ENCODE measurements at regions of chr2 and their contacts with region 1.

Region 1: DNA sequence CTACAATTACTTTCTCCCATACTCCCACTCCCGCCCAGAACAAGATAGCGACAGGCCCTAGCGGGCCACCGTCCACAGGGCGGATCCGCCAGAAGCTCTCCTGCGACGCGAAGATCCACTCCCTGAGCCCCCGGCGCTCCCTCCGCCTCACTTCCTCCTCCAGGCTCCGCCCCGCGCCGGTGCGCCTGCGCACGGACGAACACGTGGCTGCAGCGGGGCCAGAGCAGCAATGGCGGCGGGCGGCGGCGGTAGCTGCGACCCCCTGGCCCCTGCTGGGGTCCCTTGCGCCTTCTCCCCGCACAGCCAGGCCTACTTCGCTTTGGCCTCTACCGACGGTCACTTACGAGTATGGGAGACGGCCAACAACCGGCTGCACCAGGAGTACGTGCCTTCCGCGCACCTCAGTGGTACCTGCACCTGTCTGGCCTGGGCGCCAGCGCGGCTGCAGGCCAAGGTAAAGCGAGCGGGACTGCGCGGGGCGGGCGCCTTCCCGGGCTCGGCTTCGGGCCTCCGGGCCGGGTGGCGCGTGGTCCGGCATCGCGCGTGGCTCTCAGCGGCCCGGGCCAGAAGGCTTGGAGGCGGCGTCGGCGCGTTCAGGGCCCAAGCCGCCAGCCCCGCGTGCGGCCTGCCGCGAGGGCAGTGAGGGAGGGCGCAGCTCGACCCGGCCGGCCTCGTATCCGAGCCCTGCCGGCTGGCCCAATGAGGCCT is at the start of gene WDR43:
- DNase-seq: peak; percentile 98 to 99
- ATAC-seq: peak; percentile 95 to 100 (median 96)
- H3K4me3 ChIP-seq: peak within 1 kb of the TSS; percentile 96
- H3K4me3 Mint-ChIP-seq: peak within 1 kb of the TSS; percentile 91
- H3K27ac ChIP-seq: peak within 1 kb of the TSS; percentile 76
- H3K27ac Mint-ChIP-seq: peak within 1 kb of the TSS; percentile 77 to 93
- H3K4me1 ChIP-seq: peaks cover 13% of the 10 kb centered on the region
- H3K4me1 Mint-ChIP-seq: peaks cover 29 to 32% of the 10 kb centered on the region in 2 donors
- H3K27me3 ChIP-seq: no peaks in the 10 kb centered on the region
- H3K27me3 Mint-ChIP-seq: no peaks in the 10 kb centered on the region
- CTCF ChIP-seq: no peak
- total RNA-seq, gene WDR43: 45.1 to 53.2 (median 49.1) TPM

Region 2: DNA sequence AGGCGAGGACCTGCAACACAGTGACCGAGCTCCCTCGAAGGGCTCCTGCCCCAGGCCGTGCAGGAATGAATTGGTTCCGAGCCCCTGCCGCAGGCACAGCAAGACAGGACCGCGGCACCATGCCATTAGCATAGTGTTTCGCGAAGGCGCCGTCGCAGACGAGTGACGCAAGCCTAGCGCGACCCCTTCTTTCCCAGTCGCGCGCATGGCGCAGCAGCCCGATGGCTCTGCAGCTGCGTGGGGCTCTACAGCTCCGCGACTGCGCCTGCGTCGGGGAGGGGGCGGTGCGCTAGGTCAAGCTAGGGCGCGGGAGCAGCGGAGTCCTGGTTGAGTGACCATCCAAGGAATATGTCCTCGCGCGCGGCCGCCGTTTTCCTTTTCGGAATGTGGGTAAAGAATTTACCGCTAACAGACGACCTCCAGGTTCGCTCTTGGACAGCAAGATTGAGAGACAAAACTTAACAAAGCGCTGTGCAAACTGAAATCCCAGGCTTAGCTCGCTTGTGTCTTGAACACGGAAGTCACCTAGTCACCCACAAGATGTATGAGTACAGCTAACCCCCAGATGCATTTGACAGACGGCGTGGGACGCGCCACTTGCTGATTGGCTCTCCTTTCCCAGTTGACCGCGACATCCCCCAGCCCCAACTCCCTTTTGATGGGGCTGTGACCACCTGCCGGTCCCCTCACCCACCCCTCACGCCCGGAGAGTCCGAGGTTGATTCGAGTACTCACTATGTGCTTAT is 24.3 kb before region 1 on chr2 and contains the start of gene TRMT61B:
- intact Hi-C with region 1: loop called (anchors 1 kb)
- DNase-seq: peak; percentile 97 to 99
- ATAC-seq: peak; percentile 95 to 98 (median 96)
- H3K4me3 ChIP-seq: peak within 1 kb of the TSS; percentile 75
- H3K4me3 Mint-ChIP-seq: peak within 1 kb of the TSS; percentile 95
- H3K27ac ChIP-seq: peak within 1 kb of the TSS; percentile 87
- H3K27ac Mint-ChIP-seq: peak within 1 kb of the TSS; percentile 96 to 97
- H3K4me1 ChIP-seq: peaks cover 21% of the 10 kb centered on the region
- H3K4me1 Mint-ChIP-seq: peaks cover 28 to 29% of the 10 kb centered on the region in 2 donors
- H3K27me3 ChIP-seq: no peaks in the 10 kb centered on the region
- H3K27me3 Mint-ChIP-seq: no peaks in the 10 kb centered on the region
- CTCF ChIP-seq: no peak
- total RNA-seq, gene TRMT61B: 13.6 to 19.2 (median 18.0) TPM